GM12878 (cell line): ENCODE measurements at regions of chr10 and their contacts with region 1.

Region 1: DNA sequence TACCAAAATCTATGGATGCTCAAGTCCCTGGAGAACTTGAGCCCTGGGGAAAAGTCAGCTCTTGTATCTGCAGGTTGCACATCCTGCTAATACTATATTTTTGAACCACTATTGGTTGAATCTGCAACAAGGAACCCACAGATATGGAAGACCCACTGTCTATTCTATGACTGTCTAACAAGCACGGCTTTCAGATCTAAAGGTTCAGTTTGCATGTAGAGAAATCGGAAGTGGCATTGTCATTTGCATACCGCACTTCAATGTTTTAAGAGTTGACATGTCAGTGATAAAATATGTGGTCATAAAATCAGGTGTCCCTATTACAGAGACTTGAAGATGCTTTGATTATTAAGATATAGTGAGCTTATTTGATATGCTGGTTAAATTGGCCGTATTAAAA is 95.6 kb downstream of the MALRD1 start:
- DNase-seq: no peak
- ATAC-seq: peak; percentile 73
- H3K4me3 ChIP-seq: no peak overlapping the region
- H3K27ac ChIP-seq: no peak overlapping the region
- H3K4me1 ChIP-seq: no peaks in the 10 kb centered on the region
- H3K27me3 ChIP-seq: no peaks in the 10 kb centered on the region
- CTCF ChIP-seq: no peak
- EP300 ChIP-seq: no peak
- POLR2A ChIP-seq: no peak
- RAD21 ChIP-seq: no peak

Region 2: DNA sequence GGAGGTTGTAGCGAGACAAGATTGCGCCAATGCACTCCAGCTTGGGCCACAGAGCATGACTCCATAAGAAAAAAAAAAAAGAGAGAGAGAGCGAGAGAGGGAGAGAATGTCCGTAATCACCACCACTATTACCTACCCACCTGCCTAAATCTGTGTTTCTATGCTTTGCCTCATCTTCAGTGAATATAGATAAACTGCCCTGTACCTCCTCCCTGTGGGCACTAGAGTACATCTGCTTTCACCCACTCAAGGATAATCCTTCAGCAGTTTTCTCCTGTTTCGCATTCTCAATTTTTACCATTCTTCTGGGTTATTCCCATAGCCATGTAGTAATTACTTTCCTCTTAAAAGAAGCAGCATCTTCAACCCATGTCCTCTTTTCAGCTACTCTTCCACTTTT is 115.6 kb before region 1 on chr10:
- CTCF ChIA-PET with region 1: no interaction called
- POLR2A ChIA-PET with region 1: no interaction called
- RAD21 ChIA-PET with region 1: no interaction called
- SMC1A ChIA-PET with region 1: no interaction called
- in situ Hi-C with region 1: no loop called
- intact Hi-C with region 1: no loop called
- DNase-seq: no peak
- ATAC-seq: no peak
- H3K4me3 ChIP-seq: no peak overlapping the region
- H3K27ac ChIP-seq: no peak overlapping the region
- H3K4me1 ChIP-seq: no peaks in the 10 kb centered on the region
- H3K27me3 ChIP-seq: no peaks in the 10 kb centered on the region
- CTCF ChIP-seq: no peak
- EP300 ChIP-seq: no peak
- POLR2A ChIP-seq: no peak
- RAD21 ChIP-seq: no peak

Region 3: GRCh38 chr10:19133992-19134391 is 10.2 kb before region 1 on chr10:
- CTCF ChIA-PET with region 1: interaction called, 4 read pairs
- POLR2A ChIA-PET with region 1: no interaction called
- RAD21 ChIA-PET with region 1: interaction called, 3 read pairs
- SMC1A ChIA-PET with region 1: interaction called, 11 read pairs
- in situ Hi-C with region 1: no loop called
- intact Hi-C with region 1: no loop called
- DNase-seq: no peak
- ATAC-seq: no peak
- H3K4me3 ChIP-seq: no peak overlapping the region
- H3K27ac ChIP-seq: no peak overlapping the region
- H3K4me1 ChIP-seq: no peaks in the 10 kb centered on the region
- H3K27me3 ChIP-seq: no peaks in the 10 kb centered on the region
- CTCF ChIP-seq: no peak
- EP300 ChIP-seq: no peak
- POLR2A ChIP-seq: no peak
- RAD21 ChIP-seq: no peak

Region 4: GRCh38 chr10:19154355-19154754 is 10.1 kb after region 1 on chr10:
- CTCF ChIA-PET with region 1: interaction called, 4 read pairs
- POLR2A ChIA-PET with region 1: interaction called, 4 read pairs
- RAD21 ChIA-PET with region 1: interaction called, 16 read pairs
- SMC1A ChIA-PET with region 1: interaction called, 7 read pairs
- in situ Hi-C with region 1: no loop called
- intact Hi-C with region 1: no loop called
- DNase-seq: no peak
- ATAC-seq: peak; percentile 21; the same call in 1 of the 3 replicates
- H3K4me3 ChIP-seq: no peak overlapping the region
- H3K27ac ChIP-seq: no peak overlapping the region
- H3K4me1 ChIP-seq: no peaks in the 10 kb centered on the region
- H3K27me3 ChIP-seq: no peaks in the 10 kb centered on the region
- CTCF ChIP-seq: no peak
- EP300 ChIP-seq: no peak
- POLR2A ChIP-seq: no peak
- RAD21 ChIP-seq: no peak

Region 5: DNA sequence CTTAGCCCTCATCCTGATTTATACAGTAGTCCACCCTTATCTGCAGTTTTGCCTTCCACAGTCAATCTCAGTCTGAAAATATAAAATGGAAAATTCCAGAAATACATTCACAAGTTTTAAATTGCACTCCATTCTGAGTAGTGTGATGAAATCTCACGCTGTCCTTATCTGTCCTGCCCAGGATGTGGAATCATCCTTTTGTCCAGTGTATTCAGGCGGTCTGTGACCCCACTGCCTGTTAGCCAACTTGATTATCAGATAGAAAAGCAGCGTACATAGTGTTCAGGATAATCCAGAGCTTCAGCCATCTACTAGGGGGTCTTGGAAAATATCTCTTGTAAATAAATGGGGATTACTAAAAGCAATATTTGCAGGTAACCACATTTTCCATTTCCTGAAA is 50.7 kb after region 1 on chr10:
- CTCF ChIA-PET with region 1: no interaction called
- POLR2A ChIA-PET with region 1: no interaction called
- RAD21 ChIA-PET with region 1: interaction called, 13 read pairs
- SMC1A ChIA-PET with region 1: interaction called, 9 read pairs
- in situ Hi-C with region 1: no loop called
- intact Hi-C with region 1: no loop called
- DNase-seq: no peak
- ATAC-seq: no peak
- H3K4me3 ChIP-seq: no peak overlapping the region
- H3K27ac ChIP-seq: no peak overlapping the region
- H3K4me1 ChIP-seq: no peaks in the 10 kb centered on the region
- H3K27me3 ChIP-seq: no peaks in the 10 kb centered on the region
- CTCF ChIP-seq: no peak
- EP300 ChIP-seq: no peak
- POLR2A ChIP-seq: no peak
- RAD21 ChIP-seq: no peak